CD8-positive, alpha-beta T cell (primary cell): ENCODE measurements at regions of chr1 and their contacts with region 1.

Region 1: DNA sequence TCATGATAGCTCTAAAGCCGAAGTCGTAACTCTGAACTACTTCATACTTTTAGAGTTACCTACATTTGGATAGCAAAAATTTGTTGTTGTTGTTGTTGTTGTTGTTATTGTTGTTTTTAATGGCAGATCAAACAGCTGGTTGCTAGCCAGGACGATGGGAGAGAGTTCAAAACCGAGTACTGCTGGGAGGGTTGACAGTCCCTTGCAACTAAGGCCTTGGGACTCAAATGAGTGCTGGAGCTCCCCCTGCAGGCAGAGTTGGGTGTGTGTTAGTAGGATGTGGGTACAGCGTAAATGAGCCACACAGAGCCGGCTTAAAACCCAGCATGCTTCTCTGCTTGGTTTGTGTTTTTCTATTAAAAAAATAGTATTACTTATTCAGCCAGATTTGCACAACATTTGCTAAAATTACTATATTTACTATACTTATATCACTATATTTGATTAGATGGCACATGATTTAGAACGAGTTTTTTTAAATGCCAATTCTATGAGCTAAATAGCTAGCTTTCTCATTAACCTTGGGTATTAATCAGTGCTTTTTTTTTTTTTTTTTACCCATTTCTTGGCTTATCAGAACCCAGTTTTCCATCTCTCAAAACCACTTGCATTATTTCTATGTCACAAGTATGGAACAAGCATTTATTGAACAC is 129.2 kb upstream of the SYT6 start:
- DNase-seq: peak; percentile 67 to 91 (median 84)
- ATAC-seq: peak; percentile 99
- H3K4me3 ChIP-seq: no peak overlapping the region
- H3K4me3 Mint-ChIP-seq: no peak overlapping the region
- H3K27ac ChIP-seq: no peak overlapping the region
- H3K27ac Mint-ChIP-seq: no peak overlapping the region
- H3K4me1 ChIP-seq: no peaks in the 10 kb centered on the region
- H3K4me1 Mint-ChIP-seq: peaks cover 8% of the 10 kb centered on the region
- H3K27me3 ChIP-seq: no peaks in the 10 kb centered on the region
- H3K27me3 Mint-ChIP-seq: no peaks in the 10 kb centered on the region
- CTCF ChIP-seq: peak; percentile 80

Region 2: GRCh38 chr1:113835642-113836307 is 447.1 kb before region 1 on chr1:
- CTCF ChIA-PET with region 1: interaction called, 11 read pairs
- POLR2A ChIA-PET with region 1: interaction called, 4 read pairs
- intact Hi-C with region 1: loop called (anchors 1 to 2 kb)
- DNase-seq: peak in 4 of 9 experiments; percentile 17 to 77 (median 54)
- ATAC-seq: no peak
- H3K4me3 ChIP-seq: no peak overlapping the region
- H3K4me3 Mint-ChIP-seq: no peak overlapping the region
- H3K27ac ChIP-seq: no peak overlapping the region
- H3K27ac Mint-ChIP-seq: no peak overlapping the region
- H3K4me1 ChIP-seq: no peaks in the 10 kb centered on the region
- H3K4me1 Mint-ChIP-seq: peaks cover 7% of the 10 kb centered on the region
- H3K27me3 ChIP-seq: no peaks in the 10 kb centered on the region
- H3K27me3 Mint-ChIP-seq: no peaks in the 10 kb centered on the region
- CTCF ChIP-seq: peak; percentile 86

Region 3: GRCh38 chr1:114033974-114034373 is 248.9 kb before region 1 on chr1:
- CTCF ChIA-PET with region 1: interaction called, 10 read pairs
- POLR2A ChIA-PET with region 1: no interaction called
- intact Hi-C with region 1: loop called in 1 of 2 experiments (anchors 2 kb)
- DNase-seq: no peak
- ATAC-seq: no peak
- H3K4me3 ChIP-seq: no peak overlapping the region
- H3K4me3 Mint-ChIP-seq: no peak overlapping the region
- H3K27ac ChIP-seq: no peak overlapping the region
- H3K27ac Mint-ChIP-seq: no peak overlapping the region
- H3K4me1 ChIP-seq: no peaks in the 10 kb centered on the region
- H3K4me1 Mint-ChIP-seq: no peaks in the 10 kb centered on the region
- H3K27me3 ChIP-seq: no peaks in the 10 kb centered on the region
- H3K27me3 Mint-ChIP-seq: no peaks in the 10 kb centered on the region
- CTCF ChIP-seq: no peak

Region 4: GRCh38 chr1:114270282-114270681 is 12.6 kb before region 1 on chr1:
- CTCF ChIA-PET with region 1: interaction called, 65 read pairs
- POLR2A ChIA-PET with region 1: interaction called, 4 read pairs
- intact Hi-C with region 1: no loop called
- DNase-seq: no peak
- ATAC-seq: no peak
- H3K4me3 ChIP-seq: no peak overlapping the region
- H3K4me3 Mint-ChIP-seq: no peak overlapping the region
- H3K27ac ChIP-seq: no peak overlapping the region
- H3K27ac Mint-ChIP-seq: no peak overlapping the region
- H3K4me1 ChIP-seq: no peaks in the 10 kb centered on the region
- H3K4me1 Mint-ChIP-seq: peaks cover 7% of the 10 kb centered on the region
- H3K27me3 ChIP-seq: no peaks in the 10 kb centered on the region
- H3K27me3 Mint-ChIP-seq: peaks cover 15% of the 10 kb centered on the region
- CTCF ChIP-seq: no peak

Region 5: GRCh38 chr1:114482204-114482980 is 199.5 kb after region 1 on chr1:
- CTCF ChIA-PET with region 1: no interaction called
- POLR2A ChIA-PET with region 1: no interaction called
- intact Hi-C with region 1: no loop called
- DNase-seq: peak in 3 of 9 experiments; percentile 30 to 57 (median 34)
- ATAC-seq: peak; percentile 75
- H3K4me3 ChIP-seq: no peak overlapping the region
- H3K4me3 Mint-ChIP-seq: peak overlapping the region; percentile 62
- H3K27ac ChIP-seq: peak overlapping the region in 1 of 2 experiments; percentile 67
- H3K27ac Mint-ChIP-seq: peak overlapping the region; percentile 88
- H3K4me1 ChIP-seq: peaks cover 19% of the 10 kb centered on the region
- H3K4me1 Mint-ChIP-seq: peaks cover 54% of the 10 kb centered on the region
- H3K27me3 ChIP-seq: no peaks in the 10 kb centered on the region
- H3K27me3 Mint-ChIP-seq: no peaks in the 10 kb centered on the region
- CTCF ChIP-seq: no peak

Region 6: DNA sequence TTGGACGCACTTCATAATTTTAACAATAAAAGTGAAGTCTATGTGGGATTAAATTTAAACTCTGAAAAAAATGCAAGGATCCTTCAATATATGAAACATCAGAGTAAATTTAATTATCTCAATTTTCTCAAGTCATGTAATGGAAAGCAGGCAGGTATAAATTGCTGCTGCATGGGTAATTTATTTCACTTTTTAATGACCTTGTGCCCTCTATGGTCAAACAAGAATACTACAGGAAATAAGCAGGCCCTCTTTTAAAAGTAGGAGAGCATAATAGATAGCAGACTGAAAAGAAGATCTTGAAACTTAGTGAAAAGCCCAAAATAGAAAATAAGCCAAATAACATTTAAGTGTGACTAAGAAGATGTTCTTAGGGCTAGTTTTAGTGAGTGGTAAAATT is 275.7 kb after region 1 on chr1:
- CTCF ChIA-PET with region 1: interaction called, 4 read pairs
- POLR2A ChIA-PET with region 1: no interaction called
- intact Hi-C with region 1: loop called in 1 of 2 experiments (anchors 5 kb)
- DNase-seq: peak in 2 of 9 experiments; percentile 26 to 48
- ATAC-seq: no peak
- H3K4me3 ChIP-seq: no peak overlapping the region
- H3K4me3 Mint-ChIP-seq: no peak overlapping the region
- H3K27ac ChIP-seq: no peak overlapping the region
- H3K27ac Mint-ChIP-seq: no peak overlapping the region
- H3K4me1 ChIP-seq: no peaks in the 10 kb centered on the region
- H3K4me1 Mint-ChIP-seq: no peaks in the 10 kb centered on the region
- H3K27me3 ChIP-seq: no peaks in the 10 kb centered on the region
- H3K27me3 Mint-ChIP-seq: no peaks in the 10 kb centered on the region
- CTCF ChIP-seq: peak; percentile 48